AG04450 (cell line): ENCODE measurements at regions of chr21 and their contacts with region 1.

Region 1: DNA sequence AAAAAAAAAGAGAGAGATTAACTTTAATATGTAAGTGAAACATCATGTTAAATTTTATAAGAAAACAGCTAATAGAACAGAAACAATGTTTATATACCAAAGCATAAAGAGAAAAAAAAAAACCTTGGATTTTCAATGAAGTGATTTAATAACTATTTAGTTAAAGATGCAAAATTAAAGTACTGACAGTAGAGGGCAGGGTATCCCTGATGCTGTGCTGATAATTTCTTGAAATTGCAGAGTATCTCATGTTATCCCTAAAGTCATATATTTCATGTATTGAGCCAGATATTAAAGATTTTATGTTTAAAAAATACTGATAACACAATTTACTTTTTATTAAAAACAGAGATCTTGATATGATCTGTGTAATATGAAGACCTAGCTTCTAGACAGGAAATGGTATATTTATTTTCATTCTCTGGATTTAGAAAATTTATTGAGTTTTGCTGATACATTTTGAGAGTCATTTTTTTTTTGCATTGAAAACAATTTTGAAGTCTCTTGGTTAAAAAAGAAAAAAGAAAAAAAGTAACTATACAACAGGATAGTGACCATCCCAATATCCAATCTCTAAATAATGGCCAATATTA is 273.2 kb downstream of the USP25 start:
- DNase-seq: no peak
- H3K4me3 ChIP-seq: no peak overlapping the region
- H3K27ac ChIP-seq: no peak overlapping the region
- H3K27me3 ChIP-seq: no peaks in the 10 kb centered on the region
- CTCF ChIP-seq: peak; percentile 60

Region 2: GRCh38 chr21:15992171-15992570 is 10.8 kb before region 1 on chr21:
- CTCF ChIA-PET with region 1: interaction called, 18 read pairs
- POLR2A ChIA-PET with region 1: no interaction called
- DNase-seq: no peak
- H3K4me3 ChIP-seq: no peak overlapping the region
- H3K27ac ChIP-seq: no peak overlapping the region
- H3K27me3 ChIP-seq: no peaks in the 10 kb centered on the region
- CTCF ChIP-seq: no peak

Region 3: GRCh38 chr21:16028142-16028541 is 25.2 kb after region 1 on chr21:
- CTCF ChIA-PET with region 1: no interaction called
- POLR2A ChIA-PET with region 1: no interaction called
- DNase-seq: no peak
- H3K4me3 ChIP-seq: no peak overlapping the region
- H3K27ac ChIP-seq: no peak overlapping the region
- H3K27me3 ChIP-seq: no peaks in the 10 kb centered on the region
- CTCF ChIP-seq: no peak

Region 4: GRCh38 chr21:16330082-16330907 is 327.3 kb after region 1 on chr21:
- CTCF ChIA-PET with region 1: interaction called, 36 read pairs
- POLR2A ChIA-PET with region 1: no interaction called
- DNase-seq: peak; percentile 44
- H3K4me3 ChIP-seq: no peak overlapping the region
- H3K27ac ChIP-seq: no peak overlapping the region
- H3K27me3 ChIP-seq: no peaks in the 10 kb centered on the region
- CTCF ChIP-seq: peak; percentile 76

Region 5: DNA sequence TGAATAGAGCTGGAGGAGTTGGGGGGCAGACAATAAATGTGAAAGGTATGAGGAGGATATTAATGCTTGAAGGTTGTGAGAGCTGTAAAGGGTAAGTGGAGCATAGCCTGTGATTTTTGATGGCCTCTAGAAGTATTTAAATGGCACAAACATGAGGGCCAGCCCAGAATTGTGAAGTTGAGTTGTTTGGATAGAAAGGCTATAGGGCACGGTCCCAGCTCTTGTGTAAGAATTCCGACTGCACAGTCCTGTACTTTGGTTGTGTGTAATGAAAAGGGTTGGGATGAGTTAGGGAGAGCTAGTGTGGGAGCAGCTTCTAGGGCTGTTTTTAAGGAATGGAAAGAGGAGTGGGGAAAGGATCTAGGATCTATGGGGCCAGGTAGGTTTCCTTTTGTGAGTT is 392.3 kb after region 1 on chr21:
- CTCF ChIA-PET with region 1: interaction called, 4 read pairs
- POLR2A ChIA-PET with region 1: interaction called, 11 read pairs
- DNase-seq: no peak
- H3K4me3 ChIP-seq: no peak overlapping the region
- H3K27ac ChIP-seq: no peak overlapping the region
- H3K27me3 ChIP-seq: no peaks in the 10 kb centered on the region
- CTCF ChIP-seq: no peak